Mammary epithelial cell (primary cell): ENCODE measurements at regions of chr5 and their contacts with region 1.

Region 1: DNA sequence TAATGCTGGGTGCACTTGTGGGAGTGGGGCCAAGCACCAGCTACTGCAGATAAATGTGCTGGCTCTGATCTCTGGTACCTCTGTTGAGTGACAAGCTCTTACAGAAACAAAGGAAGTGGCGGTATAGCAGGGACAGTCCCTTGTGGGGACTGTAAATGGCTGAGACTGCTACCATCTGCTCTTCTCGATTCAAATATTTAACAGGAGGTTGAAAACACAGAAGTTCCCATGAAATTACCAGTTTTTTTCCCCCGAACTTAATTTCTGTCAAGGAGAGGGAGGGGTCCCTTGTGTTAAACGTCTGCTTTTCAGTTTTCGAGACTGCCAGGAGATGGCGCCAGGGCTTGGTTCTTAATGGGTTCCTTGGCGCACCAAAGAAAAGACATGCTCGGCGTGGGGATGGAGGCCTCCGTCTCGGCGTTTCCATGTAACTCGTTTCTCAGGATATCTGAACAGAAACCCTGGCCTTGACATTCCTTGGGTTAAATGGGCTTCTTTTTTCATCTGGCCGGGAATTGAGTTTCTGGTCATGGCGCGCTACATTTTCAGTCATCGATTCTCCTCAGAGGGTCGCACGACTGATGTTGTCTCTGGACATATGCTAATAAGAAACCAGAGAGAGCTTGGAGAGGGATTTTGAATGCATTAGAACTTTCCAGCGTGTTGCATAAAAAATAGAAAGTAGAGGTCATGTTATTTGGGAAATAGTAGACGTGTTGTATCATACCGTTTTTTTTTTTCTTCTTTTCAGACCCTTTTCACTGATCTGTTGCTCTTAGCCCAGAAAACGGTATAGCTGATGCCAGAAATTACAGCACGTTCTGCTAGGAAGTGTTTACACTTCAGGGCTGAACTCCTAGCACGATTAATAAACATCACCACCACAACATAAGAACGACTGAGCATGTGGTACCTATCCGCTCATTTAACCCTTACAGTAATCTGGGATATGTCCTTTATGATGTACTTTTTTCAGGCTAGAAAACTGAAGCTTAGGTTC is 64.0 kb downstream of the CARTPT start:
- DNase-seq: peak; percentile 47
- H3K4me3 ChIP-seq: no peak overlapping the region
- H3K27ac ChIP-seq: no peak overlapping the region
- H3K4me1 ChIP-seq: peaks cover 10% of the 10 kb centered on the region
- H3K27me3 ChIP-seq: no peaks in the 10 kb centered on the region
- CTCF ChIP-seq: peak; percentile 69 to 88

Region 2: GRCh38 chr5:71938895-71939294 is 155.8 kb after region 1 on chr5:
- CTCF ChIA-PET with region 1: no interaction called
- dilution Hi-C with region 1: no loop called
- in situ Hi-C with region 1: no loop called
- intact Hi-C with region 1: loop called (anchors 5 kb)
- DNase-seq: peak; percentile 23
- H3K4me3 ChIP-seq: no peak overlapping the region
- H3K27ac ChIP-seq: no peak overlapping the region
- H3K4me1 ChIP-seq: no peaks in the 10 kb centered on the region
- H3K27me3 ChIP-seq: no peaks in the 10 kb centered on the region
- CTCF ChIP-seq: no peak

Region 3: DNA sequence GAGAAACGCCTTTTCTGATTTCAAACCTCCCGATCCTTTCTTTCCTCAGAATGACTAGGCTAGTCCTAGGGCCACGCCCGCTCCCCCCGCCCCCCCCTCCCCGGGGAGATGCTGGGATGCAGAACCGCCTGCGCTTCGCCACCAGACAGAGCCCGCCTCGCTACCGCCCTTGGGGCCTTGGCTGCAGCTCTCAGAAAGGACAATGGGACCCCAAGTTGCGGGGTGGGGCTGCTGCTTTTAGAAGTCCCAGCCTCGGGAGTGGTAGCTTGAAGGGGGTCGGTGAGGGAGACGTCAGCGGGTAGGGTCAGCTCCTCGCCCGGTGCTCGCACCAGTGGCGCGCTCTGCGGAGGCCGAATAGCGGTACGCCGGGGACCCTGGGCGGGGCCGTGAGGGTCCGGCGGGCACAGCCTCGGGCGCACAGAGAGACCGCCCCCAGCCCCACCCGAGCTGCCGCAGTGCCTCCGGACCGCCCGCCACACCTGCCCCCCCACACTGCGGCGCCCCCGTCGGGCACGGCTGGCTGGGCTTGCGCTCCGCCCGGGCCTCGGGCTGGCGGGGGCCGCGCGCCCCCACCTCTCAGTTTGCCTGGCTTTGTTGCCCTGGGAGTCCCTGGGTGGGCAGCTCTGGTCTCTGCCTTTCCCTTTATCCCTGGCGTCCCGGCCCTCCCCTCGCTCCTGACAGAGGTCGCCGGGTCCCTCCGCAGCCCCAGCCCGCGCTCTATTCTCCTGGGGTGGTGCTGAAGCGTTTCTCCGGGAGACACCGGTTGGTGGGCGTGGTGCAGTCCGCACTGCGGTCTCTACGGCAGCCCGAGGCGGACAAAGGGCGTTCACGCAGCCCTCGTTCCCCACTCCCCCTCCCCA is 325.4 kb after region 1 on chr5:
- CTCF ChIA-PET with region 1: no interaction called
- dilution Hi-C with region 1: loop called (anchors 25 kb)
- in situ Hi-C with region 1: loop called in 1 of 2 experiments (anchors 25 kb)
- intact Hi-C with region 1: loop called (anchors 2 kb)
- DNase-seq: peak; percentile 33
- H3K4me3 ChIP-seq: peak overlapping the region; percentile 64 to 74 (median 66)
- H3K27ac ChIP-seq: no peak overlapping the region
- H3K4me1 ChIP-seq: peaks cover 22% of the 10 kb centered on the region
- H3K27me3 ChIP-seq: peaks cover 18% of the 10 kb centered on the region
- CTCF ChIP-seq: no peak

Region 4: DNA sequence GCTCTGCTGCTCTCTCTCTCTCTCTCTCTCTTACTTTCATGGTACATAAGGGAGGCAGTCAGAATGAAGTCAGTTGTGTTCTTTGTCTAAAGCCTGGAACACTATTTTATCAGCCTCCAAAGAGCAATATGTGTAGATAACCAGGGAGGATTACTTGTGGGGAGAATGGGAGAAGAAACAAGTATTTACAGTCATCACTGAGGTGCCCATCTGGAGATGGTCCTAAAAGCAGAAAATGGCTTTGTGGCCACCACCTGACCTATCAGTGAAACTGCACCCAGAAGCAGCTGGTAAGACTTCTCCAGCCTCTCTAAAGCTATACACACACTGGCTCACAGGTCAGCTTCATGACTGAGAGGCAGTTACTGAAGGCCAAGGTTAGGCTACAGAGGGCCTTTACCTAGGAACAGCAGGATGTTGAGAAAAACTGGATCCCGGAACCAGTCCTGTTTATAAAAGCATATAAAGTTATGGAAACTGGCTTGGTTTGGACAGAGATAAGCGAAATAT is 461.8 kb after region 1 on chr5:
- CTCF ChIA-PET with region 1: no interaction called
- dilution Hi-C with region 1: no loop called
- in situ Hi-C with region 1: no loop called
- intact Hi-C with region 1: loop called (anchors 2 kb)
- DNase-seq: no peak
- H3K4me3 ChIP-seq: no peak overlapping the region
- H3K27ac ChIP-seq: no peak overlapping the region
- H3K4me1 ChIP-seq: peaks cover 11% of the 10 kb centered on the region
- H3K27me3 ChIP-seq: no peaks in the 10 kb centered on the region
- CTCF ChIP-seq: peak; percentile 45 to 63

Region 5: DNA sequence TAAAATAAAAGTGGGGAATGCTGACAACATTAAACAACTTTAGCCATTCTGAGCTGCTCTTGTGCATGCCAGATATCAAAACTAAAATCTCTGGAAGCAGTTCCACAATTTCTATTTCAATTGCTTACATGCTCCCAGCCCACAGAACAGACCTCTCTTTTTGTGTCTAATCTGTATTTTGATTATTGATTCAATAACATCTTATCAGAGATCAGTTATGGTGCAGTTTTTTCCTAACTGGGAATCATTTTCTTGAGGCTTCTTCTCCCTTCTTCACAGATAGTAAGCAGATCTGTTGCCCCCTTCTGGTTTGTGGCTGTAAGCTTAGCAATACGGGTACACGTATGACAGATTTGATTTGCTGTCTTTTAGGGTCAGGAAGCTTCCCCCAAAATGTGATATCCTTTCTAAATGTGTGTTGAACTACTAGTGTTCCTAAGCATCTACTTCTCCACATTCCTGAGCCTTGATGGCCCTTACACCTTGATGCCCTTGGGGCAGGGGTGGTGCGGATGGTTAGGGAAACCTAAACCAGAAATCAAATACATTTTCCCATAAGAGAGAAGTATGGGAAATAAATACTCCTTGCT is 497.6 kb after region 1 on chr5:
- CTCF ChIA-PET with region 1: no interaction called
- dilution Hi-C with region 1: no loop called
- in situ Hi-C with region 1: loop called in 1 of 2 experiments (anchors 25 kb)
- intact Hi-C with region 1: loop called (anchors 2 kb)
- DNase-seq: peak; percentile 15
- H3K4me3 ChIP-seq: no peak overlapping the region
- H3K27ac ChIP-seq: no peak overlapping the region
- H3K4me1 ChIP-seq: no peaks in the 10 kb centered on the region
- H3K27me3 ChIP-seq: no peaks in the 10 kb centered on the region
- CTCF ChIP-seq: peak; percentile 38 to 55

Region 6: GRCh38 chr5:72319976-72320752 is 537.1 kb after region 1 on chr5 and contains the starts of genes MRPS27 and PTCD2:
- CTCF ChIA-PET with region 1: no interaction called
- dilution Hi-C with region 1: no loop called
- in situ Hi-C with region 1: loop called in 1 of 2 experiments (anchors 10 kb)
- intact Hi-C with region 1: no loop called
- DNase-seq: peak; percentile 97
- H3K4me3 ChIP-seq: peak within 1 kb of the TSS; percentile 78 to 91 (median 81)
- H3K27ac ChIP-seq: peak within 1 kb of the TSS; percentile 45
- H3K4me1 ChIP-seq: peaks cover 24% of the 10 kb centered on the region
- H3K27me3 ChIP-seq: no peaks in the 10 kb centered on the region
- CTCF ChIP-seq: no peak
- total RNA-seq, gene MRPS27: 68.2 to 74.5 TPM
- total RNA-seq, gene PTCD2: 12.5 to 19.4 TPM